Dorsolateral prefrontal cortex (tissue), 120 donors: ENCODE measurements at regions of chr12 and their contacts with region 1.

Region 1: DNA sequence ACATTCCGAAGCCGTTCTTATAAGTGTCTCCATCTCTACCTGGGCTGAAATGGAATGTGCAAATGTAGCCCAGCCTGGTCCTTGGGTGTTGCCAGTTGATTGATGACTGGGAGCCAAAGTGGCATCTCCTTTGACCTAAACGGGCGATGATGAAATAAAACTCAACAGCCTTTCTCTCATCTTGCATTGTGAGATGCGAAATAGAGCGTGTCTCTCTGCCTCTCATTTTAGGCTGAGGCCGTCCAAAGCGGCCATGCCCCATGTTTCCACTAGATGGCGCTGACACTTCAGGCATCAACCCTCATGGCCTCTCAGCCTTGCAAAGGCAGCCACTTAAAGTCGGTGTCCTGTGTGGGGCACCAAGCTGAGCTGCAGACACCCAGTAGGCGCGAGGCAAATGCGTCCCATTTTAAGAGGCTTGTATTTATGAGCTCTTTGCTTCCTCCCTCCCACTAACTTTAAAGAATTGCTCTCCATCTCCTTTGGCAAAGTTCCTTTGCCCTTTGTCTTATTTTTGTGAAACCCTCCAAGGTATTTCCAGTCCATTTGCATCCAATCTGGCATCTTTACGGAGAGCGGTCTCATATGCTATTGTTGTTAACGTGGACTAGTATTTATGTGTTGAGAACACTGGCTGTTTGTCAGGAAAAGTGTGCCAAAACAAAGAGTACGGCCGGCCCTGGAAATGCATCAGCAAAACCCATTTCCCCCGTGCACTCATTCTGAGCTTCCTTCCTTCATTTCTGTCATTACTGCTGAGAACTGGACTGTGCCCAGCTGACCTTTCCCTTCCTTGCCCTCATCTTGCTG is 25.0 kb downstream of the GPRC5A start:
- DNase-seq: peak; percentile 86 to 97 (median 93)
- H3K4me3 ChIP-seq: peak overlapping the region in 56 of 59 donors; percentile 0 to 61 (median 32)
- H3K27ac ChIP-seq: peak overlapping the region; percentile 3 to 96 (median 82)
- H3K27me3 ChIP-seq: no peaks in the 10 kb centered on the region
- CTCF ChIP-seq: peak; percentile 94 to 100 (median 99)

Region 2: GRCh38 chr12:12870454-12870853 is 45.9 kb before region 1 on chr12:
- intact Hi-C with region 1: no loop called
- DNase-seq: no peak
- H3K4me3 ChIP-seq: no peak overlapping the region
- H3K27ac ChIP-seq: no peak overlapping the region
- H3K27me3 ChIP-seq: no peaks in the 10 kb centered on the region
- CTCF ChIP-seq: no peak

Region 3: GRCh38 chr12:12975322-12976077 is 59.2 kb after region 1 on chr12:
- intact Hi-C with region 1: loop called (anchors 2 kb)
- DNase-seq: peak in 9 of 10 donors; percentile 34 to 70 (median 55)
- H3K4me3 ChIP-seq: peak overlapping the region in 1 of 59 donors; percentile 6
- H3K27ac ChIP-seq: peak overlapping the region; percentile 43 to 94 (median 86)
- H3K27me3 ChIP-seq: no peaks in the 10 kb centered on the region
- CTCF ChIP-seq: peak in 55 of 56 donors; percentile 24 to 75 (median 52)

Region 4: DNA sequence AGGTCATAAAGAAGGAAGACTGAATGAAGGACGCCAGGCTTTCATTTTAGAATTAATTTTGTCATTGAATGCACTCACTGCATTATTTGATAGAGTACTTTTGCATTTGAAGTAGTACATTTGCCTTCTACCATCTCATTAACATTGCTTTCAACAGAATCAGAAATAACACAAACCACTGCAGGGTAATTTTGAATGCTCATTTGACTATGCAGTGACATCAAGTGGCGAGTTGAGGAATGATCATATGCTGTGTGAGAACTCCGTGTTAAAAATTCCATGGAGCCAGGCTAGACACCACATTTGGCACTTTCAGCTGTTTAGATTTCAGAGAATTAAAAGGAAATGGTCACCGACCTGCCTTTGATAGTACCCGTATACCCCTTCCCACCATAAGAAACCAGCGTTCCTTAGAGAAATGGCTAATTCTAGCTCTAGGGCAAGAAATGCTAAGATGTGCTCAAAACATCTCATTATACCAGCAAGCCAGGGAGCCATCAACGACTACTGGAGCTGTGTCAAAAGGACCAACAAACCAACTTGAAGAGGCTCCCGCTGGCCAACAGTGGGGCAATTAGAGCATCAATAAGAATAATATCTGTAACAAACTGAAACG is 67.2 kb after region 1 on chr12:
- intact Hi-C with region 1: loop called in 1 of 2 experiments (anchors 2 kb)
- DNase-seq: peak in 2 of 10 donors; percentile 47 to 58
- H3K4me3 ChIP-seq: peak overlapping the region in 1 of 59 donors; percentile 15
- H3K27ac ChIP-seq: peak overlapping the region in 58 of 59 donors; percentile 8 to 87 (median 74)
- H3K27me3 ChIP-seq: no peaks in the 10 kb centered on the region
- CTCF ChIP-seq: peak; percentile 37 to 92 (median 78)

Region 5: DNA sequence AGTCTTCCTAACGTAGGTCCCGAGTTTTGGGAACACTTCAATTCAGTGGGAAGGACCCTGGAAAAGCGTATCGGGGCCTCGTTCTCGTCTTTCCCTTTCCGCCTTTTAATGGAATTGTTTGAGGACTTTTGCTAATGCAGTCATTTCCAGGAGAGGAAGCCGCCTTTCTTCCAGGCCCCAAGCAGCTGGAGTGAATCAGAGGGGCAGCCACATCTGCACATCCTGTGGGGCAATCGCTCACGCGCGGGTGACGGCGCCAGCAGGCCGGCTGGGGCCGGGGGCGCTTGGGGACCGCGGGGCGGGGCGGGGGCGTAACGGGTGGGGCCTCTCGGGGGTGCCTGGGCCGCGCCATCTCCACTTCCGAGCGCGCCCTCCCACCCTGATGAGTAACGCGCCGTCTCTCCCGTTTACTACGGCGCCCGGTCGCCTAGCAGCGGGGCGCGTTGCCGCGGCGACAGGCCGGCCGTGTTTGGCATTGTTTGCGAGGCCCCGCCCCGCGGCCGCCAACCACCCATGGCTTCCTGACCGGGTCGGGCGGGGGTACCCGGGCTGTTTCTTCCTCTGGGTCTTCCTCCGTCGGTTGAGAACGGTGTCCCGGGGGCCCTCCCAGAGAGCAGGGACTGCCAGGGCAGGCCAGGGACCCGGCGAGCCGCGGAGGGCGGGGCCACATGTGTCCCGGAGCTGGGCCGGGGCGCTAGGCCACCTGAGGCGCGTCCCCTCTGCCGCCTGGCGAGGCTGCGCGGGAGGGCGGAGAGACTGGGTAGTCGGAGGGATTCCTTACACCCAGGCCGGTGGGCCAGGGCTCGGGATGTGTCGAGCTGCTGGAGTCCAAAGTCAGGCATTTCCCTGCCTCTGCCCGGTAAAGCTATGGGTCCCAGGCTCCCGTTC is 184.8 kb after region 1 on chr12:
- intact Hi-C with region 1: loop called in 1 of 2 experiments (anchors 5 kb)
- DNase-seq: peak; percentile 65 to 91 (median 80)
- H3K4me3 ChIP-seq: peak overlapping the region; percentile 49 to 88 (median 70)
- H3K27ac ChIP-seq: peak overlapping the region; percentile 81 to 99 (median 96)
- H3K27me3 ChIP-seq: no peaks in the 10 kb centered on the region
- CTCF ChIP-seq: peak in 19 of 56 donors; percentile 4 to 57 (median 18)